Stomach (tissue), 19 donors: ENCODE measurements at regions of chr11 and their contacts with region 1.

Region 1: DNA sequence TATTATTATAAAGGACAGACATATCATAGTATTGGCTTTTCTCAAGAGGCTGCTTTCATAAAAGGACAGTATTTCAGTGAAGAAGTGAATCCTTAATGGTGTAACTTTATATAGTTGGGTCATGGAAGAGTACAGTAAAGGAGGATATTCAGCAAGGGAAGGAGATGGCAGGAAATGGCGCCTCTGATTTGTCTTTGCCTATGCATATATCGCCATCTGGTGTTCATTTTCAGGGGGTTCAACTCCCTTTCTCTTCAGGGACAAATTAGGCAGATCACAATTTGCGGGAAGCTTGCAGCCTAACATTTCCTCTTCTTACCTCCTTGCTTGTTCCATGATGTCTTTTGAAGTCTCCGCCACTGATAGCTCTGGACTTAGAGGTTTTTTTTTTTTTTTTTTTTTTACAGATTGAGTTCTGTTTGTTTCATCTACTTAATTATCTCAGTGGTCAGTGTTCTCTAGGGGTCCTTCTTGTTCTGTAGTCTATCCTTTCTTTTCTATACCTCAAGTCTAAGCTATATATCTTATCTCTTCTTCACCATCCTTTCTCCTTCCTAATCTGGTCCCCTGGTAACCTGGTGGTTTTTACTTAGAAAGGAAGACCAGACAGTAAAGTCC is 21.8 kb upstream of the RRM1 start:
- DNase-seq: peak; percentile 58 to 93
- H3K4me3 ChIP-seq: no peak overlapping the region
- H3K27ac ChIP-seq: peak overlapping the region in 1 of 5 donors; percentile 9
- H3K4me1 ChIP-seq: peaks cover 0 to 44% (median 21%) of the 10 kb centered on the region in 4 donors
- H3K27me3 ChIP-seq: no peaks in the 10 kb centered on the region
- CTCF ChIP-seq: peak in 5 of 7 experiments; percentile 57 to 93 (median 82)
- EP300 ChIP-seq: no peak
- POLR2A ChIP-seq: no peak

Region 2: GRCh38 chr11:3854977-3855807 is 217.6 kb before region 1 on chr11 and contains the start of gene STIM1:
- intact Hi-C with region 1: loop called (anchors 5 kb)
- DNase-seq: peak; percentile 95 to 98
- H3K4me3 ChIP-seq: peak within 1 kb of the TSS; percentile 76 to 90 (median 86)
- H3K27ac ChIP-seq: peak within 1 kb of the TSS; percentile 97 to 99 (median 98)
- H3K4me1 ChIP-seq: peaks cover 39 to 55% (median 52%) of the 10 kb centered on the region in 4 donors
- H3K27me3 ChIP-seq: no peaks in the 10 kb centered on the region
- CTCF ChIP-seq: peak in 6 of 7 experiments; percentile 93 to 99 (median 97)
- EP300 ChIP-seq: no peak
- POLR2A ChIP-seq: peak in 1 of 4 donors; percentile 61
- total RNA-seq, gene STIM1: 21.4 to 70.7 (median 49.8) TPM

Region 3: GRCh38 chr11:4393209-4393857 is 320.6 kb after region 1 on chr11 and contains the start of gene TRIM21:
- intact Hi-C with region 1: no loop called
- DNase-seq: peak; percentile 87 to 96
- H3K4me3 ChIP-seq: peak within 1 kb of the TSS; percentile 67 to 92 (median 74)
- H3K27ac ChIP-seq: peak within 1 kb of the TSS; percentile 73 to 96 (median 85)
- H3K4me1 ChIP-seq: peaks cover 5 to 25% (median 15%) of the 10 kb centered on the region in 4 donors
- H3K27me3 ChIP-seq: no peaks in the 10 kb centered on the region
- CTCF ChIP-seq: no peak
- EP300 ChIP-seq: no peak
- POLR2A ChIP-seq: peak in 1 of 4 donors; percentile 13
- total RNA-seq, gene TRIM21: 11.7 to 22.8 (median 15.2) TPM